ENCODE measurements at regions of chr1 and their contacts with region 1.

Region 1: DNA sequence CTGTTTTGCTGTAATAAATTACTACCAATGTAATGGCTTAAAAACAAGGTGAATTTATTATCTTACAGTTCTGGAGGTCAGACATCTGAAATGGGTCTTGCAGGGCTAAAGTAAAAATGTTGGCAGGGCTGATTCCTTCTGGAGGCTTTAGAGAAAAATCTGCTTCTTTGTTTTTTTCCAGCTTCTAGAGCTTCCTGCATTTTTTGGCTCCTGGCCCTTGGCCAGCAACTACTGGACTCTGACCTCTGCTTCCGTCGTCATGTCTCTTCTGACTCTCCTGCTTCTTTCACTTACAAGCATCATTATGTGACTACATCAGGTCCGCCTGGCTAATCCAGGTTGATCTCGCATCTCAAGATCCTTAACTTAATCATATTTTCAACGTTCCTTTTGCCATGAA is 350.9 kb downstream of the S1PR1 start:
- DNase-seq: no peak

Region 2: GRCh38 chr1:103489935-103490334 is 1902.2 kb after region 1 on chr1:
- intact Hi-C with region 1: loop called in 1 of 2 experiments (anchors 5 kb)
- DNase-seq: no peak

Measured in posterior vena cava (tissue), 2 donors.